ENCODE measurements at regions of chr17 and their contacts with region 1.

Region 1: GRCh38 chr17:30433514-30433913 is 43.7 kb upstream of the GOSR1 start:
- DNase-seq: no peak
- ATAC-seq: peak in 1 of 2 donors; percentile 73

Region 2: DNA sequence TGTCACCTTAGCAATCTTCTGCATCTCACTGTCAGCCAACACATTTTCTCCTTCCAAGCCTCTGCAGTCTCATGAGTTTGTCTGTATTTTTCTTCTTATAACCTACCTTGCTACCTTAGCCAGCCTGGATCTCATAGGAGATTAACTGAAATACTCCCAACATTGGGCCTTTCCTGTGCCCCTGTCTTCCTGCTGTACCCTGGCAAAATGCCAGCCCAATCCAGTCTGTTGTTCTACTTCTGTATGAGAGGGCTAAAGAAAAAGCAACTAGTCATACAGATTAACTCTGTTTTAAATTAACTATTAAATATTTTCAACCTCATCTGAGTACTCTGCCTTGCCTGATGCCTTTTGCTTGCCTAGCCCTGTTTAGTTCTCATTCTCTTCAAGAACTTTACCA is 62.1 kb after region 1 on chr17:
- intact Hi-C with region 1: loop called in 1 of 2 experiments (anchors 10 kb)
- DNase-seq: peak; percentile 37
- ATAC-seq: no peak

Region 3: DNA sequence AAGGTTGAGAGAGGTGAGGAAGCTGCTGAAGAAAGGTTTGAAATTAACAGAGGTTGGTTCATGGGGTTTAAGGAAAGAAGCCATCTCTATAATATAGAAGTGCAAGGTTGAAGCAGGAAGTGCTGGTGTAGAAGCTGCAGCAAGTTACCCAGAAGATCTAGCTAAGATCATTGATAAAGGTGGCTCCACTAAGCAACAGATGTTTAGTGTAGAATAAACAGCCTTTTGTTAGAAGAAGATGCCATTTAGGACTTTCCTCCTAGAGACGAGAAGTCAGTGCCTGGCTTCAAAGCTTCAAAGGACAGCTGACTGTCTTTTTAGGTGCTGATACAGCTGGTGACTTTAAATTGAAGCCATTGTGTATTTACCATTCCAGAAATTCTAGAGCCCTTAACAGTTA is 73.0 kb after region 1 on chr17:
- intact Hi-C with region 1: no loop called
- DNase-seq: no peak
- ATAC-seq: no peak

Measured in left cardiac atrium (tissue), 4 donors.